Activated CD4-positive, alpha-beta memory T cell treated with anti-CD3 and anti-CD28 coated beads for 36 hours (primary cell): ENCODE measurements at regions of chr14 and their contacts with region 1.

Region 1: GRCh38 chr14:66507722-66508546 is at the start of gene GPHN:
- DNase-seq: peak; percentile 95
- H3K4me3 Mint-ChIP-seq: peak within 1 kb of the TSS; percentile 89
- H3K27ac Mint-ChIP-seq: peak within 1 kb of the TSS; percentile 92
- H3K4me1 Mint-ChIP-seq: peaks cover 33% of the 10 kb centered on the region
- H3K27me3 Mint-ChIP-seq: peaks cover 4% of the 10 kb centered on the region
- total RNA-seq, gene GPHN: 19.5 to 23.1 TPM

Region 2: DNA sequence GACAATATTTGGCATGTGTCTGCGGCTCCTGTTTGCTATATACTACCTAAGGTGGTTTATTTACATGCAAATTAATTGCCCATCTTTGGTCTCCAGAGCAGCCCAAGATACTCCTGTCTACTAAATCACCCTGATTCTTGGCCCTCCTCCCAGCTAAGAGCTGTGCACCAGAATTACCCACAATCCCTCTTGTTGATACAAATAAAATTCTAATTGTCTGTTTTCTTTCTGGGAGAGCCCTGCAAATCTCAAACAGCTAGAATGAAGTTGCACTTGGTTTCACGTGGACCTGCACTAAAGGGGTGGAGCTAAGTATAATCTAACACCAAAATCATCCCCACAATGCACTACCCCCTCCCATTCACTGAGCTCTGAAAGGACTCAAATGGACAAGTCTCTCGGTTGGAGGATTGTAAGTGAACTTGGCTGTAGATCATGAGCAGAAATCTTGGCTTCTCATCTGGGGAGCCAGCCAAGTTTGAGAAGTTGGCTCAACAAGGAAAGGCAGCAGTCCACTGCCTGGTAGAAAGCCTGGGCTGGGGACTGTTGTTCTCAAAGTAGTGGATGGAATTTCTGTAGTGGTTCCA is 1412.2 kb before region 1 on chr14:
- CTCF ChIA-PET with region 1: no interaction called
- POLR2A ChIA-PET with region 1: no interaction called
- intact Hi-C with region 1: loop called (anchors 5 kb)
- DNase-seq: no peak
- H3K4me3 Mint-ChIP-seq: no peak overlapping the region
- H3K27ac Mint-ChIP-seq: no peak overlapping the region
- H3K4me1 Mint-ChIP-seq: peaks cover 79% of the 10 kb centered on the region
- H3K27me3 Mint-ChIP-seq: no peaks in the 10 kb centered on the region

Region 3: DNA sequence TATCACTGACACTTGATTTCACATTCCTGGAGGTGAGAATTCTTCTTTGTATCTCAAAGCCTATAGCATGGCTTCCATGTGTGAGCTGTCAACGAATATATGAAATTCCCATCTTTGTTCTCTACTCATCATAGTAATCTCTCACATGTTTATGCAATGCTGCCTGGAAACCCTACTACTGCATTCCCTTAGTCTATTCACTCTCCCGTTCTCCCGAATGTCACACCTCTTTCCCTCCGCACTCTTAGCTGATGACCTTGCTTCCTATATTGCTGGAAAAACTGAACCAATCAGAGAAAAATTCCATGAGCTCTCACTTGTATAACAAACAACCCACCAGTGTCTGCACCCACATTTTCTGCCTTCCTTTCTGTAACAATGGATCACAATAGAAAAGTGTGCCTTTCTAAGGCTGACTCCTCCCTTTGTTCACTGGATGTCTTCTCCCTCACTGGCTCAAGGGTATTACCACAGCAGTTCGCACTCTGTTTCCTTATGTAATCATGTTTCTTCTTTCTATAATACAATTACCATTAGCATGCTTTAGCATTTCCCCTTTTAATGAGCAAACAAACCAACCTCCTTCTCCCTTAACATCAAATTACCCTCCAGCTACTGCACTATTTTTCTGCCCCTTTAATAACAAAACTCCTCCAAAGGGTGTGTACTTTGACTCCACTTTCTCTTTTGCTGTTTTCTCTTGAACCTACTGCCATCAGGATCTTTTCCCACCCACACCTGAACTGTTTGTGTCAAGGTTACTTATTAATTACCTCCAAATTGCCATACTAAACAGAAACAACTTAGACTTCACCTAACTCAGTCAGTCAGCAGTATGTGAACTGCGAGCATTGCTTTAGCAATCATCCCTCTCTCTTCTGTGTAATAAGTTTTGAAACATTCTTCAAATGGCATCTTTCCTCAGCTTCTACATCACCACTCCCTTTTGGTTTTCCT is 85.7 kb before region 1 on chr14:
- CTCF ChIA-PET with region 1: no interaction called
- POLR2A ChIA-PET with region 1: no interaction called
- intact Hi-C with region 1: no loop called
- DNase-seq: no peak
- H3K4me3 Mint-ChIP-seq: no peak overlapping the region
- H3K27ac Mint-ChIP-seq: no peak overlapping the region
- H3K4me1 Mint-ChIP-seq: no peaks in the 10 kb centered on the region
- H3K27me3 Mint-ChIP-seq: no peaks in the 10 kb centered on the region

Region 4: GRCh38 chr14:66606826-66607225 is 98.9 kb after region 1 on chr14:
- CTCF ChIA-PET with region 1: no interaction called
- POLR2A ChIA-PET with region 1: no interaction called
- intact Hi-C with region 1: loop called (anchors 5 kb)
- DNase-seq: no peak
- H3K4me3 Mint-ChIP-seq: no peak overlapping the region
- H3K27ac Mint-ChIP-seq: no peak overlapping the region
- H3K4me1 Mint-ChIP-seq: peaks cover 41% of the 10 kb centered on the region
- H3K27me3 Mint-ChIP-seq: no peaks in the 10 kb centered on the region

Region 5: GRCh38 chr14:66662374-66662773 is 154.4 kb after region 1 on chr14:
- CTCF ChIA-PET with region 1: no interaction called
- POLR2A ChIA-PET with region 1: no interaction called
- intact Hi-C with region 1: no loop called
- DNase-seq: no peak
- H3K4me3 Mint-ChIP-seq: no peak overlapping the region
- H3K27ac Mint-ChIP-seq: no peak overlapping the region
- H3K4me1 Mint-ChIP-seq: no peaks in the 10 kb centered on the region
- H3K27me3 Mint-ChIP-seq: no peaks in the 10 kb centered on the region

Region 6: GRCh38 chr14:67240978-67241414 is 733.1 kb after region 1 on chr14:
- CTCF ChIA-PET with region 1: no interaction called
- POLR2A ChIA-PET with region 1: interaction called, 9 read pairs
- intact Hi-C with region 1: loop called (anchors 2 kb)
- DNase-seq: peak; percentile 96
- H3K4me3 Mint-ChIP-seq: peak overlapping the region; percentile 82
- H3K27ac Mint-ChIP-seq: peak overlapping the region; percentile 83
- H3K4me1 Mint-ChIP-seq: peaks cover 8% of the 10 kb centered on the region
- H3K27me3 Mint-ChIP-seq: no peaks in the 10 kb centered on the region

Region 7: GRCh38 chr14:67816326-67817002 is 1308.5 kb after region 1 on chr14 and contains the start of gene ZFYVE26:
- CTCF ChIA-PET with region 1: no interaction called
- POLR2A ChIA-PET with region 1: no interaction called
- intact Hi-C with region 1: loop called (anchors 5 kb)
- DNase-seq: peak; percentile 95
- H3K4me3 Mint-ChIP-seq: peak within 1 kb of the TSS; percentile 93
- H3K27ac Mint-ChIP-seq: peak within 1 kb of the TSS; percentile 90
- H3K4me1 Mint-ChIP-seq: peaks cover 50% of the 10 kb centered on the region
- H3K27me3 Mint-ChIP-seq: no peaks in the 10 kb centered on the region
- total RNA-seq, gene ZFYVE26: 12.5 to 12.6 TPM